ENCODE measurements at regions of chr15 and their contacts with region 1.

Region 1: GRCh38 chr15:93348711-93349545 is 259.9 kb upstream of the RGMA start:
- DNase-seq: no peak
- H3K4me3 ChIP-seq: no peak overlapping the region
- H3K27ac ChIP-seq: no peak overlapping the region
- H3K4me1 ChIP-seq: no peaks in the 10 kb centered on the region
- H3K27me3 ChIP-seq: peaks cover 0 to 2% of the 10 kb centered on the region in 2 donors
- CTCF ChIP-seq: no peak

Region 2: GRCh38 chr15:93399121-93399520 is 50.2 kb after region 1 on chr15:
- intact Hi-C with region 1: loop called (anchors 10 kb)
- DNase-seq: no peak
- H3K4me3 ChIP-seq: no peak overlapping the region
- H3K27ac ChIP-seq: no peak overlapping the region
- H3K4me1 ChIP-seq: no peaks in the 10 kb centered on the region
- H3K27me3 ChIP-seq: no peaks in the 10 kb centered on the region
- CTCF ChIP-seq: no peak